ENCODE measurements at regions of chr1 and their contacts with region 1.

Region 1: DNA sequence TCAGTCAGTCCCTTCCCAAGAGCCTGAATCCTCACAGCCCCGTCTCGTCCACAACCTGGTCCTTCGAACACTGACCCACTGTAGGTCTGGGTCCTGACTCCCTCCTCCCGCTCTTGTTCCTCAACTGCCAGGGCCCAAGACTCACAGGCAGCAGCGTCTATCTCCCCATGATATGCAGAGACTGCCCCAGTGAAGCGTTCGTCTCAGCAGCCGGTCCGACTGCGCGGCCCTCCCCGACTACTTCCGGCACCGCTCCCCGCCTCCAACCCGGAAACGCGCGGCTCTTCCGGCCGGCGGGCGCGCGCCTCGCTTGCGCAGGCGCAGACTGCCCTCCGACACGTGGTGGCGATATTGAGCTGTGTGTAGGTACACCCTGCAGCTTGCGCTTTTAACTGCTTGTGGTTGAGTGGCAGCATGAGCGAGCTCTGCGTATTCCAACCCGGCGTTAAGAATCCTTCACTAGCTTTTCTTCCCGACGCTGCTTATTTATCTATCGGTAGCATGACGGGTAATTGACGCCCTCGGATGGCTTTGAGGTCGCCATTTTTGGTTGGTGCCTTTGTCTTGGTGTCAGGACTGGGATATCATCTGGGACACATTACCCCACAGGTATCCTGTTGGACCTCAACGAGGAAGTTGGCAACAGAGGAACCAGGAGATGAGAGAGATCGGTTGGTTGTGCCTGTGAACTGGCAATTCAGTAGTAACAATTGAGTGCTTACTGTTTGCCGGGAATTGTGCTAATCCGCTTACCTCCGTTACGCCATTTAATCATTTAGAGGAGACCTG is at the start of gene TAF12:
- DNase-seq: peak; percentile 80 to 95 (median 90)

Region 2: GRCh38 chr1:28668191-28668955 is 25.3 kb after region 1 on chr1 and contains the start of gene GMEB1:
- intact Hi-C with region 1: loop called (anchors 1 kb)
- DNase-seq: peak; percentile 61 to 94 (median 86)

Region 3: GRCh38 chr1:28736450-28737306 is 93.6 kb after region 1 on chr1 and contains the start of gene YTHDF2:
- intact Hi-C with region 1: loop called (anchors 2 kb)
- DNase-seq: peak; percentile 89 to 98 (median 96)

Region 4: GRCh38 chr1:28779751-28780408 is 136.8 kb after region 1 on chr1:
- intact Hi-C with region 1: no loop called
- DNase-seq: no peak

Measured in head of caudate nucleus (tissue), 42 donors.